GM13977 (cell line): ENCODE measurements at regions of chr18 and their contacts with region 1.

Region 1: DNA sequence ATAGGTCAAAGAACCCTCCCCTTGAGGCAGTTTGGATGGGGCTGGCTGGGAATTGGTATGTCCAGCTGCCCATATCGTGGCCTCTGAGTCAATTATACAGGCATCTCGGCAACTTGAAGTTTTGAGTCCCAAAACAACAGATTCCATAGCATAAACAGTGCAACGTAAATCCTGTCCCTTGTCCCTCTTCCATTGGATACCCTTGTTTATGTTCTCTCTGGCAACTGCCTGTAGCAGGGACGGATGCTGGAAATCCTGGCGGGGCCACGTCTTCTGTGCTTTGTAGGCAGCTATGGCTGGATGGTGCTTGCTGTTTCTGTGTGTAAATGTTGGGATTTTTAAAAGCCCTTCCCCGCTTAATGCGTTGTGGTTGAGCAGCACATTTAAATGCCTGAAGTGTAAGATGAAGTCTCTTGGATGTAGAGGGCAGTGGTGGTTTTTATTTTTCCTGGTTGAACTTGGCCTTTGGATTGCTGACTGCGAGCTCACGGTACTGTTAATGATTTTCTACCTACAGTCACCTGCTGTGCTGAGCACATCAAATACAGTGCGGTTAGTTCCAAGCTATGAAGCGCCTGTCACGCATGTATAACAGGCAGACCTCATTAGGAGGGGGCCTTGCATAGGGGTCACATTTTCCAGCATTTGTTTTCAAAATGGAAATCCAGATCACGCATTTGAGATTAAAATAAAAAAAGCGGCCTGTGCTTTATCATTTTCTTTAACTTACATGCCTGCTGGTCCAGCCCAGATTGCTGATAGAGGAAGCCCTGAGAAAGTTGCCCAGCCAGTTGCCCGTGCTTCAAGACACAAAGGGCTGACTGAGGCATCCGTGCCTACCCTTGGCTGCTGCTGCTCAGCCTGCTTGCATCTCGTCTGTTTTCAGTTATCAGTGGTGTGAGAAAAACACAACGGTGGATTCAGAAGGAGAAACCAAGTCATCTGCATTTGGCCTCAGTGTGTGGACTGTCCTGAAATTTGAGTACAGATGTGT is 84.7 kb downstream of the NEDD4L start:
- DNase-seq: no peak
- CTCF ChIP-seq: no peak

Region 2: DNA sequence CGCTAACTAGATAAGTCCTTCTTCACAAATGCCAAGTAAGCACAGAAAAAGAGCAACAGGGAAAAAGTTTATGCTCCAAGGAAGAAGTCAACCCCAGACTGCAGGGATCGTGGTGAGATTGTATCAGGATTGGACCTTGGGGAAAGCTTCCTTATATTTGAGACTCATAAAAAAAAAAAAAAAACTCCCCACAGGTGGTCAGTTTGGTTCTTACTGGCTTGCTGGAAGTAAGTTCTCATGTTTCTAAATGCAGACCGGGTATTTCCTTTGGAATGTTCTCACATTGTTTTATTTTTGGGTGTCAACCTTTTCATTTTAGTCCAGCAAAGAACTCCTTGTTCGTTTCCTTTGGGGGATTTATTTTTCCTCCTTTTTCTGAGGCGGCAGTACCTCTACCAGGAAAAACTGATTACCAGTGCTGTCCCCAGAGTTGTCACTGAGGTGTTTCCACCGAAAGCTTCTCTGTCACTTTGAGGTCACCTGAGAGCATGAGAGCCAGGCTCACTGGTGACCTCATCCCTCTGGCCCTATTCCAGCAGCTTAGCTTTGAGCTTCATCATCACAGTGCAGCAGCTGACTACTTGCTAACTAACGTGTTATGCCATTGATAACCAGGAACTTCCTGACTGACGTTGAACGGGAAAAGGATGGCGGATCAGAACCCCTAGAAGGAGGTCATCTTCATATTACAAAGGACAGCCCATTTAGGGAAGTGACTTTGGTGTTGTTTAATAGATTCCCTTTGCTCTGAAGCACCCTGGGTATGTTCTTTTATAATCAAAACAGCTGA is 308.8 kb before region 1 on chr18:
- in situ Hi-C with region 1: no loop called
- DNase-seq: peak; percentile 22
- CTCF ChIP-seq: no peak

Region 3: DNA sequence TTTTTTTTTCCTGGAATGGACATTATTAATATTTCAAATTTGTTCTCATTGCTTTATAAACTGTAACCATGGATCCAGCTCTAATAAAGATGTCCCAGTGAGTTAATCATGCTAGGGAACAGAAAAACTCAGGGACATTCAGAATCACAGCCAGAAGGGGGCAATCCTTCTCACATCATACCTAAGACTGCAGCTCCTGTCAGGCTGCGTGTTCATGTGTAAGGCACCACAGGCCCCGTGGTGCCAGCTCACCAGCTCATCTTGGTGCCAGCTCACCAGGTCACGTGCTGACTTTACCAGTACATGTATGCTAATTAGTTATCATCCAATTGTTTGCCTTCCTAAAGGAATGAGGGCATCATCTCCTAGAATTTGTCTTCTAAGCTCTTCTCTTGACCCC is 169.4 kb before region 1 on chr18:
- in situ Hi-C with region 1: loop called (anchors 10 kb)
- DNase-seq: peak; percentile 40
- CTCF ChIP-seq: peak; percentile 42

Region 4: GRCh38 chr18:58567453-58568196 is 438.9 kb after region 1 on chr18:
- in situ Hi-C with region 1: no loop called
- DNase-seq: no peak
- CTCF ChIP-seq: no peak